GM10248 (cell line): ENCODE measurements at regions of chr1 and their contacts with region 1.

Region 1: DNA sequence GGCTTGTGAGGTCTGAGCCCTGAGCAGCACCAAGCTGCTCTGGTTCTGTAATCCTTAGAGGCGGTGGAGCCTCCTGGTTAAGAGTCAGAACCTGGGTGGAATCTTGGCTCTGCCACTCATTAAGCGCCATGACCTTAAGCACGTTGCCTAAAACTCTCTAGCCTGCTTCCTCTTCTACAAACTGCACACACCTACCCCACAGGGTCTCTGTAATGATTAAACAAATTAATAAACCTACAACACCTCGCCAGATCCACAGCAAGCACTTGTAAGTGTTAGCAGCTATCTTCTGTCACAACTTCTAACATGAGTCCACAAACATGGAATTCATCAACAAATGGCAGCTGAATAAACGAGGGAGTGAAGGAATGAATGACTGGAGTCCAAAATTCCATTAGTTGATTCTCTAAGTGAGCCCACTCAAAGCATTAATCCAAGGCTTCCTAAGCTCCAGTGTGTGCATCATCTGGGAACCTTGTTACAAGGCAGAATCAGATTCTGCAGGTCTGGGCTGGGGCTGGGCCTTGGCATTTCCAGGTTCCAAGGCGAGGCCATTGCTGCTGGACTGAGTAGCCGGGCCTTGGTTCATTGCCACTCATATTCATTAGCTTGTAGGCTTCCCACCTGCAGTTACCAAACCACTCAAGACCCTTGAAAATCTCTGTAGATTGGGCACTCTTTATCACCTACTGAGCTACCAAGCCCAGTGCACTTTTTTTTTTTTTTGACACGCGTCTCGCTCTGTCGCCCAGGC is 168.6 kb downstream of the HIVEP3 start:
- DNase-seq: no peak
- CTCF ChIP-seq: no peak

Region 2: DNA sequence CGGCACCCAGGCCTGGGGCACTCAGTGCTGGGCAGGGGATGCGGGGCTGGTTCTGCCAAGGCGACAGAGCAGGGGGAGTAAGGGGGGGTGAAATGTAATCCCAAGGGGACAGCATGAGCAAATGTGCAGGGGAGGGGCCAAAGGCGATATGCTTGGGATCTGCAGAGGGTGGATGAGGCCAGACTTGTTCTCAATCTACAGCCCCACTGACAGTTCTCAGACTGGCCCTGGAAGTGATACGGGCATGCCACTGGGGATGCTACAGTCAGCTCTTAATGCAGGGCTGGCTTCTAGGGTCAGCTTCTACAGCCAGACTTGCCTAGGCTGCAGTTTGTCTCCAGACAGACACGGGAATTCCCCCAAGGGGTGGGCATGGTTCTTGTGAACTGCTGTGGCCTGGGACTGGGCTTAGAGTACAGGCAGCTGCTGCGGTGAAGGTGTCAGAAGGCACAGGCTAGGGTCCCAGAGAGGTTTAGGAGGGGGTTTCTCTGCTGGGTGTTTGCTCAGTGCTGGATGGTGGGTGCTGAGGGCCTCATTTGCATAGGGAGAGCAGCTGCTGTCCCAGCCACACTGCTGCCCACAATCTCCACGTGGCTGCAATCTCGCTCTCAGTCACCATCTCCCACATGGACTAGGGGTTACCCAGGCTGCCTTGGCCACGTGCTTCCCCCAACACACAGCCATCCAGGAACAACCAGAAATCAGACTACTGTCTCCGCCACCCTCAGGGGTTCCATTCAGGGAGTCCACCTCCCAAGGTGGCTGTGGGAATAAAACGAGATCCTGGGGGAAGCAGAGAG is 21.6 kb before region 1 on chr1:
- CTCF ChIA-PET with region 1: interaction called, 12 read pairs
- POLR2A ChIA-PET with region 1: no interaction called
- DNase-seq: peak; percentile 89
- CTCF ChIP-seq: no peak